ENCODE measurements at regions of chr4 and their contacts with region 1.

Region 1: GRCh38 chr4:48746608-48747362 is 33.3 kb downstream of the FRYL start:
- DNase-seq: peak in 5 of 9 donors; percentile 3 to 31 (median 16)
- ATAC-seq: peak; percentile 84
- H3K4me3 ChIP-seq: no peak overlapping the region
- H3K4me3 Mint-ChIP-seq: peak overlapping the region in 8 of 10 donors; percentile 30 to 74 (median 62)
- H3K27ac ChIP-seq: peak overlapping the region; percentile 20
- H3K27ac Mint-ChIP-seq: peak overlapping the region; percentile 42 to 90 (median 75)
- H3K4me1 ChIP-seq: peaks cover 8 to 19% of the 10 kb centered on the region in 2 donors
- H3K4me1 Mint-ChIP-seq: peaks cover 52 to 91% (median 76%) of the 10 kb centered on the region in 7 donors
- H3K27me3 ChIP-seq: no peaks in the 10 kb centered on the region
- H3K27me3 Mint-ChIP-seq: no peaks in the 10 kb centered on the region

Region 2: GRCh38 chr4:47224361-47224760 is 1522.4 kb before region 1 on chr4:
- CTCF ChIA-PET with region 1: no interaction called
- POLR2A ChIA-PET with region 1: no interaction called
- intact Hi-C with region 1: no loop called
- DNase-seq: no peak
- ATAC-seq: no peak
- H3K4me3 ChIP-seq: no peak overlapping the region
- H3K4me3 Mint-ChIP-seq: no peak overlapping the region
- H3K27ac ChIP-seq: no peak overlapping the region
- H3K27ac Mint-ChIP-seq: no peak overlapping the region
- H3K4me1 ChIP-seq: no peaks in the 10 kb centered on the region
- H3K4me1 Mint-ChIP-seq: no peaks in the 10 kb centered on the region
- H3K27me3 ChIP-seq: no peaks in the 10 kb centered on the region
- H3K27me3 Mint-ChIP-seq: peaks cover 0 to 22% (median 18%) of the 10 kb centered on the region in 5 donors

Region 3: DNA sequence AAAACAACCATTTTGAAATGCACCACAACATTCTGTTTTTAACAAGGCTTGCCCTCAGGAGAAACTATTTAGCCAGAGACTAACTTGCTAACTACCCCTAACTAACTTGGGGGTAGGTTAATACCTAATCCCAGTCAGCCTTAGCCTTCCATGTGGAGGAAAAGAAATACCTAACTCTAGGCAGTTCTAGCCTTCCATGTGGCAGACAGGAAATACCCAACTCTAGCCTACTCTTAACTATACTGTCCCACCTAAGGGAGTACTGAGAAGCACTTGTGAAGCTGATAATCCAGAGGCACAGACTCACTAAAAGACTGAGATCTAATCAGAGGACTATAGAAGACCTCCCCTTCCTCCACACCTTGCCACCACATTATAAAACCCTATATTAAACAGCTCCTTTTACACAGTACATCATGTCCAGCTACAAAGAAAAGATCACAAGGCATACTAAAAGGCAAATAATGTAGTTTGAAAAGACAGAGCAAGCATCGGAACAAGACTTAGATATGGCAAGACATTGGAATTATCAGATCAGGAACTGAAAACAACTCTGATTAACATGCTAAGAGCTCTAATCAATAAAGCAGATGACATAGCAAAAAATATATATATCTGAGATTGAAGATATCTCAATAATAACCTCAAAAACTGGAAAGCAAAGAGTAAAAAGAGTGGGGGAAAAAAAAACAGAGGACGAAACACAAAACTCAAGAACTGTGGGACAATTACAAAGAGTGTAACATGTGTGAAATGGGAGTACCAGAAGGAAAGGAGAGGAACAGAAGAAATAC is 18.9 kb before region 1 on chr4:
- CTCF ChIA-PET with region 1: no interaction called
- POLR2A ChIA-PET with region 1: interaction called, 3 read pairs
- intact Hi-C with region 1: loop called in 1 of 2 experiments (anchors 2 kb)
- DNase-seq: no peak
- ATAC-seq: no peak
- H3K4me3 ChIP-seq: no peak overlapping the region
- H3K4me3 Mint-ChIP-seq: peak overlapping the region in 9 of 10 donors; percentile 2 to 79 (median 65)
- H3K27ac ChIP-seq: no peak overlapping the region
- H3K27ac Mint-ChIP-seq: peak overlapping the region in 8 of 9 donors; percentile 2 to 83 (median 27)
- H3K4me1 ChIP-seq: peaks cover 28 to 37% of the 10 kb centered on the region in 2 donors
- H3K4me1 Mint-ChIP-seq: peaks cover 71 to 96% (median 94%) of the 10 kb centered on the region in 7 donors
- H3K27me3 ChIP-seq: no peaks in the 10 kb centered on the region
- H3K27me3 Mint-ChIP-seq: no peaks in the 10 kb centered on the region

Region 4: DNA sequence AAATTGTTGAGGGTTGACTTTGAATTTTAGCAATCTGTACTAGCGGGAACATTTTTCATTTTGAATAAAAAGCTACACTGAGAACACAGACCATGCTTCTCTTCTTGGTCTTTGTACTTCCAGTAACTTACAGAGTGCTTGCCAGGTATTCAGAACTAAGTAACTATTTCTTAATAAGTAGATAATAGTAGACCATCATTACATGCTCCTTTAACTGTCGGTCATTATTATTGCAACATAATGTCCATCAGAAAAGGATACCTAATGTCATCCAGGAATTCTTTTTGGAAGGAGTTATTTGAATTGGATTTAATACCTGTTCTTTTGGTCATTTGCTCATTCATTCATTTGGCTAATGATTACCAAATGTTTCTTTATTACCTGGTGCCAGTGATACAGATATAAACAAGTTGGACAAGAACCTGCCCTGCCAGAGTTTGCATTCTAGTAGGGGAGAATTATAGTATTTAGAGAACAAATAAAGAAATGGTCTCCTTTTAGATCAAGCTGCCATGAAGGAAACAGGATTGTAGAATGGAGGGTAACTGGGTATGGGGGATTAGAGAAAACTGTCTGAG is 272.0 kb after region 1 on chr4:
- CTCF ChIA-PET with region 1: no interaction called
- POLR2A ChIA-PET with region 1: no interaction called
- intact Hi-C with region 1: no loop called
- DNase-seq: no peak
- ATAC-seq: no peak
- H3K4me3 ChIP-seq: no peak overlapping the region
- H3K4me3 Mint-ChIP-seq: no peak overlapping the region
- H3K27ac ChIP-seq: no peak overlapping the region
- H3K27ac Mint-ChIP-seq: no peak overlapping the region
- H3K4me1 ChIP-seq: no peaks in the 10 kb centered on the region
- H3K4me1 Mint-ChIP-seq: no peaks in the 10 kb centered on the region
- H3K27me3 ChIP-seq: no peaks in the 10 kb centered on the region
- H3K27me3 Mint-ChIP-seq: peaks cover 0 to 38% (median 16%) of the 10 kb centered on the region in 5 donors

Measured in naive thymus-derived CD4-positive, alpha-beta T cell (primary cell).